ENCODE measurements at regions of chr20 and their contacts with region 1.

Region 1: DNA sequence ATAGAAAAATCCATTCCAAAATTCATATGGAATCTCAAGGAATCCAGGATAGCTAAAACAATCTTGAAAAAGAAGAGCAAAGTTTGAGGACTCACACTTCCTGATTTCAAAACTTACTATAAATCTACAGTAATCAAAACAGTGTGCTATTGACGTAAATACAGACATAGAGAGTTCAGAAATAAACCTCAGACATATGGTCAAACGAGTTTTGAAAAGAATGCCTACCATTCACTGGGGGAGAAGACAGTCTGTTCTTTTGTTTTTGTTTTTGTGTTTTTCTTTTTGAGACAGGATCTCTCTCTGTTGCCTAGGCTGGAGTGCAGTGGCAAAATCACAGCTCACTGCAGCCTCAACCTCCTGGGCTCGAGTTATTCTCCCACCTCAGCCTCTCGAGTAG is 25.3 kb upstream of the PROKR2 start:
- DNase-seq: no peak
- H3K4me3 ChIP-seq: no peak overlapping the region
- H3K27ac ChIP-seq: no peak overlapping the region
- H3K4me1 ChIP-seq: no peaks in the 10 kb centered on the region
- H3K27me3 ChIP-seq: no peaks in the 10 kb centered on the region
- CTCF ChIP-seq: no peak
- EP300 ChIP-seq: no peak
- POLR2A ChIP-seq: no peak

Region 2: GRCh38 chr20:5234978-5235377 is 107.0 kb before region 1 on chr20:
- intact Hi-C with region 1: loop called (anchors 5 kb)
- DNase-seq: no peak
- H3K4me3 ChIP-seq: no peak overlapping the region
- H3K27ac ChIP-seq: no peak overlapping the region
- H3K4me1 ChIP-seq: no peaks in the 10 kb centered on the region
- H3K27me3 ChIP-seq: no peaks in the 10 kb centered on the region
- CTCF ChIP-seq: no peak
- EP300 ChIP-seq: no peak
- POLR2A ChIP-seq: no peak